ENCODE measurements at regions of chr3 and their contacts with region 1.

Region 1: DNA sequence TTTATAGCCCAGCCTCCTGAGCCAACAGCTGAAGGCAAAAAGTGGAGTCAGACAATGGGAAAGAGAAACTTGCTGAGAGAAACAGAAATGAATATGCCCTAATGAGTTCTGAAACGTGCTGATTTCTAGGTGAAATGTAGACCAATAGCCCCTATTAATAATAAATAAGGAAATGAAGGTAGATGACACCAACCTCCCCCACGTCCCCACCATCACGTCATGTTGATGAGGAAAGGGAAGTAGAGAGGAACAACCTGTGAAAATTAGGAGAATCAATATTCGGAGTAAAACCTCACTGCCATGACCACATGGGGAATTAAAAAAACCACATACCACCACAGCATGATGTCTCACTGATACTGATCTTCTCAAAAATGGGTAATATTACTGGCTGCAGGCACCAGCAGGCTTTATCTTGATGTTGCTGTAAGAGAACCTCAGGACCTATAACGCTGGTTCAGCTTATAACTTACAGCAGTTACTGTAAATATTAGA is 64.0 kb downstream of the KAT2B start:
- DNase-seq: peak; percentile 59 to 77 (median 77)
- H3K4me3 ChIP-seq: no peak overlapping the region
- H3K4me3 Mint-ChIP-seq: peak overlapping the region; percentile 43 to 94 (median 74)
- H3K27ac ChIP-seq: peak overlapping the region; percentile 56
- H3K27ac Mint-ChIP-seq: peak overlapping the region; percentile 91 to 98 (median 94)
- H3K4me1 ChIP-seq: peaks cover 95% of the 10 kb centered on the region
- H3K4me1 Mint-ChIP-seq: peaks cover 50 to 92% (median 63%) of the 10 kb centered on the region in 4 donors
- H3K27me3 ChIP-seq: no peaks in the 10 kb centered on the region
- H3K27me3 Mint-ChIP-seq: no peaks in the 10 kb centered on the region

Region 2: DNA sequence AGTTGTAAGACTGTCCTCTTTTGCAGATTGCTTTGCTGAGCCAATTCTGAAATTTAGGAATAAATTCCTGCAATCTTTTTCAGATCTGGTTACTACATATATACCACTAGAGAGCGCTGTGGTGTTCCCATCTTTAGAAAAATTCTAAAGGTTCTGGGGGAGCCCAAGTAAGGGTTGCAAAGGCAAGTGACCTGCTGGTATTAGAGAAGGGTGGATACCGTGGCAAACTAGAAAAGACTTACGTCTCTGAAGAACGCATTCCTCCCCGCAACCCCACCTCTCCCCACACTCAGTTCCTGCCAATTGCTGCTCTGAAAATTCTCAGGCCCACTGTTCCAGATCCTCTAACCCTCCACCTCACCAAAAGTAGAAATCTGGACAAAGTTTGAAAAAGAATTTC is 218.7 kb before region 1 on chr3:
- CTCF ChIA-PET with region 1: no interaction called
- POLR2A ChIA-PET with region 1: no interaction called
- intact Hi-C with region 1: loop called (anchors 5 kb)
- DNase-seq: peak in 4 of 5 donors; percentile 9 to 22 (median 18)
- H3K4me3 ChIP-seq: no peak overlapping the region
- H3K4me3 Mint-ChIP-seq: no peak overlapping the region
- H3K27ac ChIP-seq: no peak overlapping the region
- H3K27ac Mint-ChIP-seq: no peak overlapping the region
- H3K4me1 ChIP-seq: no peaks in the 10 kb centered on the region
- H3K4me1 Mint-ChIP-seq: no peaks in the 10 kb centered on the region
- H3K27me3 ChIP-seq: no peaks in the 10 kb centered on the region
- H3K27me3 Mint-ChIP-seq: peaks cover 0 to 2% of the 10 kb centered on the region in 2 donors

Region 3: DNA sequence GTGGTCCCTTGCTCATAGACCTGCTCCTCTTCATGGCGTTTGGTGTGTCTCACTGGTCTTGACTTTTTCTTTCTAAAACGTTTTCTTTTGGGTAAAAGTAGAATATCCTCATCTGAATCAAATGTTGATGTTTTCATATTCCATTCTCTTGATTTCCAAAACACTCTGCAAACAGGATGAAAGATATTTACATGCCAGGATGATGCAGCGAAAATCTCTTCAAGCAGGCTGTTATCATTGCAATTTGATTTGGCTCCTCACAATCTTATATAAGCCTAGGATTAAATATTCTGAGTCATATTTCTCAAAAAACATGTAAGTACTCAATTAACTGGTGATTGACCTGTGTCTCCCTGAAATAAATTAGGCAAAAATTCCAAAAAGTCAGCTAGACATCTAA is 102.3 kb before region 1 on chr3:
- CTCF ChIA-PET with region 1: no interaction called
- POLR2A ChIA-PET with region 1: no interaction called
- intact Hi-C with region 1: no loop called
- DNase-seq: no peak
- H3K4me3 ChIP-seq: no peak overlapping the region
- H3K4me3 Mint-ChIP-seq: no peak overlapping the region
- H3K27ac ChIP-seq: no peak overlapping the region
- H3K27ac Mint-ChIP-seq: no peak overlapping the region
- H3K4me1 ChIP-seq: no peaks in the 10 kb centered on the region
- H3K4me1 Mint-ChIP-seq: no peaks in the 10 kb centered on the region
- H3K27me3 ChIP-seq: no peaks in the 10 kb centered on the region
- H3K27me3 Mint-ChIP-seq: no peaks in the 10 kb centered on the region